Naive thymus-derived CD8-positive, alpha-beta T cell (primary cell): ENCODE measurements at regions of chr5 and their contacts with region 1.

Region 1: DNA sequence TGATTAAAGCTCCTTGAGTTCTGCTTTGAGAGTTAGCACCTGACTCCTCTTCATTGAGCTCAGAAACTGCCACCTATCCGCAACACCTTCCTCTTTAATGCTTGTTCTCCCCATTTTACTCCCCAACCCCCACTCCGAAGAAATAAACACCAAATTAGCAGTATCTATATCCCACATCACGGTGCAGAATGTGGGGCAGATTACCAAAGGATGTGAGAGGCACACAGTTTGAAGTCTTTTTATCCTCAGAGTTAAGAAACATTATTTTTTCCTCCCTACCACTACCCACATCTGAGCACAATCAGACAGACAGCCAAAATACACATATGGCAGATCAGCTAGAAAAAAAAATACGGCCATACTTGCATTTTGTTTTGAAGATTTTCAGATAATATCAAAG is 26.1 kb upstream of the IL7R start:
- DNase-seq: peak in 8 of 10 donors; percentile 52 to 91 (median 70)
- ATAC-seq: peak; percentile 88 to 95
- H3K4me3 Mint-ChIP-seq: peak overlapping the region; percentile 37 to 83 (median 63)
- H3K27ac Mint-ChIP-seq: peak overlapping the region in 9 of 10 donors; percentile 23 to 95 (median 92)
- H3K4me1 Mint-ChIP-seq: peaks cover 41 to 94% (median 89%) of the 10 kb centered on the region in 4 donors
- H3K27me3 Mint-ChIP-seq: no peaks in the 10 kb centered on the region

Region 2: GRCh38 chr5:35815089-35815936 is 15.3 kb before region 1 on chr5:
- POLR2A ChIA-PET with region 1: interaction called, 35 read pairs
- DNase-seq: peak in 3 of 10 donors; percentile 27 to 65 (median 33)
- ATAC-seq: no peak
- H3K4me3 Mint-ChIP-seq: no peak overlapping the region
- H3K27ac Mint-ChIP-seq: no peak overlapping the region
- H3K4me1 Mint-ChIP-seq: peaks cover 19 to 53% (median 35%) of the 10 kb centered on the region in 4 donors
- H3K27me3 Mint-ChIP-seq: no peaks in the 10 kb centered on the region